ENCODE measurements at regions of chr11 and their contacts with region 1.

Region 1: DNA sequence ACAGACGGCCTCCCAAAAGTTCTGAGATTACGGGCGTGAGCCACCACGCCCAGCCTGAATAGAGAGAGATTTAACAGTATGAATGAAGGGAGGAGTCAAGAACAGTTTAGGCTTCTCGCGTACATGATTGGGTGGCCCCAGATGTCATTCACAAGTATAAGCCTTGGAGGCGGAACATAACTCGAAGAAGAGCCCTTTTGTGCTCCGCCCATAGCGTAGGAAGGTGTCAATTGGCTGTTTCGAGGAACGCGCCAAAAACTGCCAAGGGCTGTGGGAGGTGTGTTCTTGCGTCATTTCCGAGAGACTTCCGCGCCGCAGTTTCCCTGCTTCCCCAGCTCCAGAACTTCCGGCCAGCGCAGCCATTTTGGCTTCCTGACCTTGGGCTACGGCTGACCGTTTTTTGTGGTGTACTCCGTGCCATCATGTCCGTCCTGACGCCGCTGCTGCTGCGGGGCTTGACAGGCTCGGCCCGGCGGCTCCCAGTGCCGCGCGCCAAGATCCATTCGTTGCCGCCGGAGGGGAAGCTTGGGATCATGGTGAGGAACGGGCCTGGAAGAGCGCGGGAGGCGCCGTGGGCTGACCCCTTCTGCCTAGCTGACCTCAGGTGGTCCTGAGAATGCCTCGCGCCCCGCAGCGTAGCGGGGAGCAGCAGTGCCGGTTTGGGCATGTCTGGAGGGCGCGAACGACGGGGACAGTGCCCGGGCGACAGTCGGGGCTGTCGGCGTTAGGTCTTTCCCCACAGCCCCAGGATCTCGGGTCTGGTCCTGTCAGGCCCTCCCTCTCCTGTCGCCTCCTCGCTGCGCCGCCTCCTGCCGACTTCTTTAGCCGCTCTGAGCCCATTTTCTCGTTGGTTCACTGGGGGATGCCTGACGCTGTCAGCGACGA is at the start of gene COX8A:
- DNase-seq: peak; percentile 65 to 97 (median 94)
- ATAC-seq: peak; percentile 99
- H3K4me3 ChIP-seq: peak within 1 kb of the TSS; percentile 87
- H3K4me3 Mint-ChIP-seq: peak within 1 kb of the TSS; percentile 98 to 100 (median 99)
- H3K27ac ChIP-seq: peak within 1 kb of the TSS; percentile 94
- H3K27ac Mint-ChIP-seq: peak within 1 kb of the TSS; percentile 94 to 99 (median 99)
- H3K4me1 ChIP-seq: peaks cover 10 to 11% of the 10 kb centered on the region in 2 donors
- H3K4me1 Mint-ChIP-seq: peaks cover 12 to 36% (median 29%) of the 10 kb centered on the region in 7 donors
- H3K27me3 ChIP-seq: no peaks in the 10 kb centered on the region
- H3K27me3 Mint-ChIP-seq: peaks cover 0 to 2% (median 0%) of the 10 kb centered on the region in 5 donors
- total RNA-seq, gene COX8A: 90.9 to 363 (median 105) TPM

Region 2: DNA sequence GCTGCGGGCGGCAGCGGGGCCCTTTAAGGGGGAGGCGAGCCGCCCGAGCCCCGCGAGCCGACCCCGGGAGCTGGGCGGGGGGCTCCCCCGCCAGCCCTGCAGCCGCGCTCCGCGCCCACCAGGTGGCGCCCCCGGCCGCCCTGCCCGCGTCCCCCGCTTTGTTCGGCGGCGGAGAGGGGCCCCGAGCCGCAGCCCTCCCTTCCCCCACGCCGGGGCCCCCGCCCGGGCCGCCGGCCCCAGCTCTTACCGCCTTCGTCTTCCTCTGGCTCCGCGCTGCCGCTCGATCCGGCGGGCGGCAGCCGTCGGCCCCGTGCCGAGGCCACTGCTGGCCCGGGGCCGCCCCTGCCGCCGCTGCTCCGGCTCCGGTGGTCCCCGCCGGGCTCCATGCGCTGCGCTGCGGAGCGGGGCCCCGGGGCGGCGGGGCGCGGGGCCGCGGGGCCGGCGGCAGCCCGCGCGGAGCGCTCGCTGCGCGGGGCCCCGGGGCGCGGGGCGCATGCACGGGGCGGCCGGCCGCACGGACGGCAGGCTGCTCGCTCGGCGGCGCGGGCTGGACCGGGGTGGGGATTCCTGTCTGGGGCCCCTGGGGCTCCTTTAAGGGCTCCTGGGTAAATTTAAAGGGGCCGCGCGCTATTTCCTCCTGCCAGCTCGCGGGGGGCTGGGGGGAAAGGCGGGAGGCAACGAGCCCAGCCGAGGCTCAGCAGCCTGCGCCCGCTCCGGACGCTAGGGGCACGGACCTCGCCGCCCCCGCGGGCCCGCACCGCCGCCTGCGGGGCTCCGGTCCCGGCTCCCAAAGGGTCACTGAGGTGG is 206.1 kb before region 1 on chr11 and contains the start of gene ZFTA:
- CTCF ChIA-PET with region 1: no interaction called
- POLR2A ChIA-PET with region 1: no interaction called
- intact Hi-C with region 1: loop called in 1 of 2 experiments (anchors 10 kb)
- DNase-seq: peak; percentile 34 to 79 (median 54)
- ATAC-seq: peak; percentile 84
- H3K4me3 ChIP-seq: peak within 1 kb of the TSS; percentile 77
- H3K4me3 Mint-ChIP-seq: peak within 1 kb of the TSS; percentile 87 to 99 (median 92)
- H3K27ac ChIP-seq: peak within 1 kb of the TSS; percentile 60
- H3K27ac Mint-ChIP-seq: peak within 1 kb of the TSS; percentile 34 to 94 (median 83)
- H3K4me1 ChIP-seq: peaks cover 6 to 9% of the 10 kb centered on the region in 2 donors
- H3K4me1 Mint-ChIP-seq: peaks cover 6 to 14% (median 8%) of the 10 kb centered on the region in 7 donors
- H3K27me3 ChIP-seq: peaks cover 0 to 9% of the 10 kb centered on the region in 2 donors
- H3K27me3 Mint-ChIP-seq: peaks cover 0 to 35% (median 9%) of the 10 kb centered on the region in 5 donors
- total RNA-seq, gene ZFTA: 2.1 to 3.6 (median 2.7) TPM

Region 3: DNA sequence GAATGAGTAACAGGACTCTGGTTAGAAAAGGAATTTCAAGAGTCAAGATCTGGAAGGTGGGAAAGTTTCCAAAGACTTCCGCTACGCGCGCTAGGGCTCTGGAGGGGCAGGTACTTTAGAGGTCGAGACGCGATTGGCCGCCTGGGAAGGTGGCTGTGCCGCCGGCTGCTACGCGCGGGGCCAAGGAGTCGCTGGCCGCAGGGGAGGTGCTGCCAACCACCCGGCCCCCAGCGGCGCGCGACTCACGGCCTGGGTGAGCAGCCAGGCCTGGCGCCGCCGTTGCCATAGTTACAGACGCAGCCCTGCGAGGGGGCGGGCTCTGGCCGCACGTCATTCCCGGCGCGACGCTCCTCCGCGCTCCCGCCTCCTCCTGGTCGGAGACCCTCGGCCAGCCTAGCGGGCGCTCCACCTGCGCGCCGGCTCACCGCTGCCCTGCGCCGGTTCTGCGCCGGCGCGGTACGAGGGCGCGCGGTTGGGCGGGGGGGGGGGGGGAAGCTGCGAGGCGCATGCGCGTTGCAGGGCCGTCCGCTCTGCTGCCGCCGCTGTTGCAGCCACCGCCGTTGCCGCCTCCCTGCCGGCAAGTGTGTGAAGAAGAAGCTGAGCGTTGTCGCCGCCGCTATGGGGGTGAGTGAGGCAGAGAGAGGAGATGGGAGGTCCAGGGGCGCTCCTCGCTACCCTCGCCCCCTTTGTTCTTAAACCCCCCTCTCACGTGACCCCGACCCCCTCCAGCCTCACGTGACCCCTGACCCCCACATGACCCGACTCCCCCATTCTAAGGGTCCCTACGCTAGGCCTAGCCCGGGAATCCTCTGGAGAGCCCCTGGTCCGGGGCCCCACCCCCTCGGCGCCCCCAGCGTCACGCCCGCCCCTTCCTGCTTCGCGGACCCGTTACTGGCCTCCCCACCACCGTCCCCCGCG is 35.8 kb before region 1 on chr11 and contains the start of gene NAA40:
- CTCF ChIA-PET with region 1: interaction called, 3 read pairs
- POLR2A ChIA-PET with region 1: no interaction called
- intact Hi-C with region 1: loop called (anchors 1 kb)
- DNase-seq: peak; percentile 78 to 91 (median 84)
- ATAC-seq: peak; percentile 92
- H3K4me3 ChIP-seq: peak within 1 kb of the TSS; percentile 84
- H3K4me3 Mint-ChIP-seq: peak within 1 kb of the TSS; percentile 80 to 99 (median 94)
- H3K27ac ChIP-seq: peak within 1 kb of the TSS; percentile 73
- H3K27ac Mint-ChIP-seq: peak within 1 kb of the TSS; percentile 81 to 95 (median 89)
- H3K4me1 ChIP-seq: peaks cover 11 to 18% of the 10 kb centered on the region in 2 donors
- H3K4me1 Mint-ChIP-seq: peaks cover 22 to 28% (median 27%) of the 10 kb centered on the region in 7 donors
- H3K27me3 ChIP-seq: no peaks in the 10 kb centered on the region
- H3K27me3 Mint-ChIP-seq: peaks cover 0 to 2% (median 0%) of the 10 kb centered on the region in 5 donors
- total RNA-seq, gene NAA40: 21.0 to 39.8 (median 24.8) TPM

Region 4: DNA sequence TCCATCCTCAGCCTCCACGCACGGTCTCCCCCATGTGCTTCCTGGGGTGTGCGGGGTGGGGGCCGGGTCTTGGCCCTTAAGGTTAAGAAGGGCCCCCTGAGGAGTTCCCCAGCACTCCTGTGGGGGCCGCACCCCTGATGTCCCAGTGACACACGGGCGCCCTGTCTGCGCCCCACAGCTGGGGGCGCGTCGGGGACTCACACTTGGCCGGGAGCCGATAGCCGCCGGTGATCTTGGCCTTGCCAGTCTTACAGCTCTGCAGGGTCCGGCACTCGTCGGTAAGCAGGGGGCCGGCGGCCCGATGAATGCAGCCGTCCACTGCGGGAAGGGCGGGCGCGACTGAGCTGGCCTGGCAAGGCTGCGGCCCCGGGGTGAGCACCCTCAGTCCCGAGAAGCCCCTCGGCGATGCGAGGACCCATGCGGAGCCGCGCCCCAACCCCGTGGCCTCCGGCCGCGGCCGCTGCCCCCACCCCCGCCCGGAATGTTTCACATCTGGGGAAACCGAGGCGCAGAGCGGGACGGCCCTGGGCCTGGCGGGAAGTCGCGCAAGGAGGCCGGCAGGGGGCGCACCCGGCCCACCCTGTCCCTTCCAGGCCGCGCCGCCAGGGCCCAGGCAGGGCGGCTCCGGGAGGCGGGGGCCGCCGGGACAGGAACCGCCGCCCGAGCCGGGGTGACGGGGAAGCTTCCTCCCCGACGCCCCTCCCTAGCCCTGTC is 25.7 kb after region 1 on chr11:
- CTCF ChIA-PET with region 1: no interaction called
- POLR2A ChIA-PET with region 1: no interaction called
- intact Hi-C with region 1: loop called in 1 of 2 experiments (anchors 1 kb)
- DNase-seq: peak; percentile 59 to 82 (median 75)
- ATAC-seq: peak; percentile 88
- H3K4me3 ChIP-seq: peak overlapping the region; percentile 41
- H3K4me3 Mint-ChIP-seq: peak overlapping the region in 7 of 10 donors; percentile 14 to 76 (median 45)
- H3K27ac ChIP-seq: peak overlapping the region; percentile 16
- H3K27ac Mint-ChIP-seq: no peak overlapping the region
- H3K4me1 ChIP-seq: peaks cover 8 to 15% of the 10 kb centered on the region in 2 donors
- H3K4me1 Mint-ChIP-seq: peaks cover 0 to 16% (median 9%) of the 10 kb centered on the region in 7 donors
- H3K27me3 ChIP-seq: no peaks in the 10 kb centered on the region
- H3K27me3 Mint-ChIP-seq: peaks cover 0 to 3% (median 0%) of the 10 kb centered on the region in 5 donors

Region 5: DNA sequence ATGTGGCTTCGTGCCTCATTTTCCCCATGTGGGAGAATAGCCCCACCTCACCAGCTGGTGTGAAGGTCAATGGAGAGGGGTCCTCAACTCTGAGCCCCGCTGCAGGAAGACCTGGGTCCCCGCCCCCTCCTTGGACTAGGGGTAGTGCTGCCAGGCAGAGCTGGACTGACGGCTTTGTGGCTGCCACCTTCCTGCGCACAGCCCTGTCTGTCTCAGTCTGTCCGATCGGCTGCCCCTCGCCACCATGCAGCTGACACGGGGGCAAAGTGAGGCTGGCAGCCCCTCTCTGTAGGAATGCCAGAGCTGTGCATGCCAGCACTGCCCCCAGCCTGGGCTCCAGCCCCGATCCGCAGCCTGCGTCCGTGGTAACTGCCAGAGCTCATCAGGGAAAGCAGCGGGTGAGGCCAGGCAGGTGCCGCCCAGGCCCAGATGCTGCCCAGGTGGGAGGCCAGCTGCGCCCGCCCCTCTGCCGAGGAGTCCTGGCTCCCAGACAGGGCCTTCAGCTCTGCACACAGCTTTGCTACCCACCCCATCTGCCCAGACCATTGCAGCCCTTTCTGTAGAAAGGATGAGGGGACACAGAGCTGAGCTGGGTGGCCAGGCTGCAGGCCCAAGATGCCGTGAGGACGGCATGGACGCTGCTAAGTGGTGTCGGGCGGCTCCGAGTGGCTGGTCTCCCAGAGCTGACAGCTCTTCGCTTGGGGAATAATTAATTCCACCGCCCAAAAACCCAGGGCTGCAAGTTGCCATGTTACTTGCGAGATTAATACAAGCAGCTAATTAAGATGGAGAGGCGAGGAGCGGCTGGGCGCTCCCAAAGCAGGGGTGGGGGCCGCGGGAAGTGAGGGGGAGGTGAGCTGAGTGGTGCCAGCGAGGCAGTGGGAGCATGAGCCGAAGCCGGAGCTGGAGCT is 41.7 kb after region 1 on chr11:
- CTCF ChIA-PET with region 1: no interaction called
- POLR2A ChIA-PET with region 1: no interaction called
- intact Hi-C with region 1: no loop called
- DNase-seq: no peak
- ATAC-seq: no peak
- H3K4me3 ChIP-seq: no peak overlapping the region
- H3K4me3 Mint-ChIP-seq: no peak overlapping the region
- H3K27ac ChIP-seq: no peak overlapping the region
- H3K27ac Mint-ChIP-seq: no peak overlapping the region
- H3K4me1 ChIP-seq: no peaks in the 10 kb centered on the region
- H3K4me1 Mint-ChIP-seq: peaks cover 0 to 3% (median 0%) of the 10 kb centered on the region in 7 donors
- H3K27me3 ChIP-seq: no peaks in the 10 kb centered on the region
- H3K27me3 Mint-ChIP-seq: no peaks in the 10 kb centered on the region